Activated naive CD4-positive, alpha-beta T cell treated with anti-CD3 and anti-CD28 coated beads for 36 hours (primary cell): ENCODE measurements at regions of chr12 and their contacts with region 1.

Region 1: GRCh38 chr12:75933101-75933500 is 98.5 kb downstream of the PHLDA1 start:
- DNase-seq: no peak
- H3K4me3 Mint-ChIP-seq: no peak overlapping the region
- H3K27ac Mint-ChIP-seq: no peak overlapping the region
- H3K4me1 Mint-ChIP-seq: peaks cover 18% of the 10 kb centered on the region
- H3K27me3 Mint-ChIP-seq: peaks cover 15% of the 10 kb centered on the region

Region 2: GRCh38 chr12:75641031-75641780 is 291.9 kb before region 1 on chr12:
- CTCF ChIA-PET with region 1: no interaction called
- intact Hi-C with region 1: loop called (anchors 5 kb)
- DNase-seq: peak; percentile 26
- H3K4me3 Mint-ChIP-seq: no peak overlapping the region
- H3K27ac Mint-ChIP-seq: no peak overlapping the region
- H3K4me1 Mint-ChIP-seq: peaks cover 21% of the 10 kb centered on the region
- H3K27me3 Mint-ChIP-seq: peaks cover 12% of the 10 kb centered on the region

Region 3: GRCh38 chr12:75913502-75914351 is 19.4 kb before region 1 on chr12:
- CTCF ChIA-PET with region 1: no interaction called
- intact Hi-C with region 1: loop called (anchors 1 kb)
- DNase-seq: peak; percentile 49
- H3K4me3 Mint-ChIP-seq: no peak overlapping the region
- H3K27ac Mint-ChIP-seq: no peak overlapping the region
- H3K4me1 Mint-ChIP-seq: peaks cover 21% of the 10 kb centered on the region
- H3K27me3 Mint-ChIP-seq: no peaks in the 10 kb centered on the region

Region 4: GRCh38 chr12:75944097-75944904 is 11.2 kb after region 1 on chr12:
- CTCF ChIA-PET with region 1: no interaction called
- intact Hi-C with region 1: loop called (anchors 1 kb)
- DNase-seq: peak; percentile 44
- H3K4me3 Mint-ChIP-seq: no peak overlapping the region
- H3K27ac Mint-ChIP-seq: peak overlapping the region; percentile 87
- H3K4me1 Mint-ChIP-seq: peaks cover 22% of the 10 kb centered on the region
- H3K27me3 Mint-ChIP-seq: no peaks in the 10 kb centered on the region

Region 5: GRCh38 chr12:76311796-76312195 is 378.7 kb after region 1 on chr12:
- CTCF ChIA-PET with region 1: no interaction called
- intact Hi-C with region 1: no loop called
- DNase-seq: no peak
- H3K4me3 Mint-ChIP-seq: no peak overlapping the region
- H3K27ac Mint-ChIP-seq: no peak overlapping the region
- H3K4me1 Mint-ChIP-seq: no peaks in the 10 kb centered on the region
- H3K27me3 Mint-ChIP-seq: peaks cover 17% of the 10 kb centered on the region

Region 6: GRCh38 chr12:76449583-76449982 is 516.5 kb after region 1 on chr12:
- CTCF ChIA-PET with region 1: no interaction called
- intact Hi-C with region 1: loop called (anchors 10 kb)
- DNase-seq: no peak
- H3K4me3 Mint-ChIP-seq: no peak overlapping the region
- H3K27ac Mint-ChIP-seq: no peak overlapping the region
- H3K4me1 Mint-ChIP-seq: peaks cover 30% of the 10 kb centered on the region
- H3K27me3 Mint-ChIP-seq: no peaks in the 10 kb centered on the region